ENCODE measurements at regions of chrX and their contacts with region 1.

Region 1: DNA sequence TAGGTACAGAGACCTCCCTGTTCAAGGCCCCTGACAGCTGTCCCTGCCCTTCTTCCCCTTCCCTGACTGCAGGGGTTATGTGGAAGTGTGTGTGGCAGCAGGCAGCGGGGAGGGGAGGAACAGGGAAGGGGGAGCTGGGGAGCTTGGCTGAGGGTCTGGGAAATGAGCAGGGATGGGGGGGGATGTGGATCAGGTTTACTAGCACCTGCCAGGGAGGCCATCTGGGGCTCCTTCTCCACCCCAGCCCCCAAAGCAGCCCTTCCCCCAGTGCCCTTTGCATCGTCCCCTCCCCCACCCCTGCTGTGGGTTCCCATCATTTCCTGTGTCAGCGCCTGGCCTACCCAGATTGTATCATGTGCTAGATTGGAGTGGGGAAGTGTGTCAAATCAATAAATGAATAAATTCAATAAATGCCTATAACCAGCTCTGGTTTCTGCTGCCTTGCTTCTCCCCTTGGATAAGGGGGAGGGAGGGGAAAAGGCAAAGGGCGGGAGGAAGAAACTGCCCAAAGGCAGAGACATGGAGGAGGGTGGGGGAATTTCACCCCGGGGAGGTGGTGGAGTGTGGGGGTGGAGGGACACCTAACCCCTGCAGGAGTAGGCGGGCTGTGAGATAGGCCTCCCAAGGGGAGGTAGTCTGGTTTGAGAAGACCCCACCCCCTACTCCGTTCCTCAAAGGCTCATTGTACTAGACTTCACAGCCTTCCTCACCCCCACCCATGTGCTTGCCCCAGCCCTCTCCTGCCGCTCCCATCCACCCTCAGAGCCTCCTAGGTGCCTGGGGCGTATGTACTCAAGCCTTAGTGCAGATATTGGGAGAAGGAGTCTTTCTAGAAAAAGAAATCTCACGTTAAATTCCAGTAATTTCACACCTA is 3.2 kb downstream of the CXorf65 start:
- DNase-seq: peak; percentile 83 to 94 (median 89)
- ATAC-seq: peak; percentile 82
- H3K4me3 ChIP-seq: peak overlapping the region; percentile 44
- H3K27ac ChIP-seq: peak overlapping the region; percentile 91
- H3K4me1 ChIP-seq: peaks cover 54 to 67% of the 10 kb centered on the region in 2 experiments
- H3K27me3 ChIP-seq: no peaks in the 10 kb centered on the region
- CTCF ChIP-seq: no peak
- EP300 ChIP-seq: peak; percentile 69; the same call in 1 of the 2 replicates
- POLR2A ChIP-seq: peak; percentile 76
- RAD21 ChIP-seq: no peak

Region 2: DNA sequence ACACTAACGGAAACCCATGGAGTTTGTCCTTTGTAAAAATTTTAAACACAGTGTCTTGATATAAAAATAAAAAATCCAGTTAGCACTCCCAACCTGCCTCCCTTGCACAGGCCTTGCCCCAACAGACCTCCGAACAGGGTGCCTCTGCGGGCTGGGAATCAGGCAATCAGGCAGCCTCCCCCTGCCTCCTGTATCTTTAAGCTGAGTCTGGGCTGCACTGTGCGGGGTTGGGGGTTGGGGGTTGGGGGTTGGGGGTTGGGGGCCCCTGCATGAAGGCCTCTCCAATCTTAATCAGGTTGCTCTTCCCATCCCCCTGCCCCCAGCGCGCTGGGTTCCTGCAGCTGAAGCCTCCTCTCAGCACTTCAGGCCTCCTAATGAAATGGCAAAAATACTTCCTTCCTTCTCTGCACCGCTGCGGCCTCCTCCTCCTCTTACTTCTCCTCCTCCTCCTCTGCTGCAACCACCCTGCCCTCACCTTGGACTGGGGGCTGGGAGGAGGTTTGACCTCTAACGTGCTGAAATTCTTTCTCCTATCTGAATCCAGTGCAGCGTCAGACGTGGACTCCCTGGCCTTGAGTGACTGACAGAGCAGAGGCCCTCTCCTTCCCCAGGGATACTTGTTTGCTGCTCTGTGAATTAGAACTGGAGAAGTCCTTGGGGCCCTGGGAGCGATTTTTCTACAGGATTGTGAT is 67.9 kb after region 1 on chrX:
- CTCF ChIA-PET with region 1: no interaction called
- POLR2A ChIA-PET with region 1: no interaction called
- in situ Hi-C with region 1: loop called (anchors 5 kb)
- intact Hi-C with region 1: loop called (anchors 2 kb)
- DNase-seq: peak; percentile 38 to 74 (median 55)
- ATAC-seq: peak; percentile 83
- H3K4me3 ChIP-seq: no peak overlapping the region
- H3K27ac ChIP-seq: peak overlapping the region; percentile 78
- H3K4me1 ChIP-seq: peaks cover 23 to 25% of the 10 kb centered on the region in 2 experiments; a peak in 4 of 5 replicates
- H3K27me3 ChIP-seq: no peaks in the 10 kb centered on the region
- CTCF ChIP-seq: no peak
- EP300 ChIP-seq: no peak
- POLR2A ChIP-seq: no peak
- RAD21 ChIP-seq: no peak

Measured in K562 (cell line).